Activated naive CD4-positive, alpha-beta T cell treated with anti-CD3 and anti-CD28 coated beads for 36 hours (primary cell): ENCODE measurements at regions of chr15 and their contacts with region 1.

Region 1: GRCh38 chr15:41283653-41284426 is 48.6 kb downstream of the OIP5 start:
- DNase-seq: peak; percentile 99
- H3K4me3 Mint-ChIP-seq: peak overlapping the region; percentile 99
- H3K27ac Mint-ChIP-seq: peak overlapping the region; percentile 97
- H3K4me1 Mint-ChIP-seq: peaks cover 45% of the 10 kb centered on the region
- H3K27me3 Mint-ChIP-seq: no peaks in the 10 kb centered on the region

Region 2: GRCh38 chr15:40941528-40942336 is 342.1 kb before region 1 on chr15:
- CTCF ChIA-PET with region 1: interaction called, 3 read pairs
- intact Hi-C with region 1: loop called (anchors 5 kb)
- DNase-seq: peak; percentile 80
- H3K4me3 Mint-ChIP-seq: peak overlapping the region; percentile 82
- H3K27ac Mint-ChIP-seq: peak overlapping the region; percentile 78
- H3K4me1 Mint-ChIP-seq: peaks cover 32% of the 10 kb centered on the region
- H3K27me3 Mint-ChIP-seq: no peaks in the 10 kb centered on the region

Region 3: DNA sequence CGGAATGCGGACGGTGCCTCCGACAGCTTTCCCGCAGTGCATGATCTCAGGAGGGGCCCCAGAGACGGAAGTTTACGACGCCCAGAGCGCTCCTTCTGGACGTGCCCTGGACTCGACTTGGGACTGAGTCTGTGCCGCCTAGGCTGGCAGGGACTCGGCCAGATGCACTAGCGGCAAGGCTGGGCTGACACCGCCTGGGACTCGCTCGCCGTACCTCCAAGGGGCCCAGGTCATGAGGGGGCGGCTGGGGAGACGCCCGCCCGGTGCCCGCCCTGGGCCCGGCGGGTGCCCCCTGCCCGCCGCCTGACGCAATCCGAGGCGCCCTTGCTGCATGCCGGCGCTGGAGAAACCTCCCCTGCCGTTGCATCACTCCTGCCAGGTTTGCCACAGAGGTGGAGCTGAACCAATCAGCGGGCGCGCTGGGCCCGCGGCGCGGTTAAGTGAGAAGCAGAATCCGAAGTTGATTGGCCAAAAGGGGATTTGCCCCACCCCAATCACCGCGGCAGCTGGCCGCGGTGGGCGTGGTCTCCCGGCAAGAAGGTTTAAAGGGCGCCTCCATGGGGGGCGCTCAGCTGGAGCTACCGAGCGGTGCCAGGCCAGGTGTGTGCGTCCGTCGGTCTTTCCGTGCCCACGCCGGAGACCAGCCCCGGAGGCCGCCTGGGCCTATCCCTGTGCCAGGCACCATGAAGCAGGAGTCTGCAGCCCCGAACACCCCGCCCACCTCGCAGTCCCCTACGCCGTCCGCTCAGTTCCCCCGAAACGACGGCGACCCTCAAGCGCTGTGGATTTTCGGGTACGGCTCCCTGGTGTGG is 330.7 kb before region 1 on chr15 and contains the start of gene CHAC1:
- CTCF ChIA-PET with region 1: no interaction called
- intact Hi-C with region 1: loop called (anchors 1 kb)
- DNase-seq: peak; percentile 99
- H3K4me3 Mint-ChIP-seq: peak within 1 kb of the TSS; percentile 94
- H3K27ac Mint-ChIP-seq: peak within 1 kb of the TSS; percentile 93
- H3K4me1 Mint-ChIP-seq: peaks cover 35% of the 10 kb centered on the region
- H3K27me3 Mint-ChIP-seq: no peaks in the 10 kb centered on the region
- total RNA-seq, gene CHAC1: 19.8 to 20.2 TPM

Region 4: GRCh38 chr15:41116116-41116871 is 167.5 kb before region 1 on chr15 and contains the start of gene INO80:
- CTCF ChIA-PET with region 1: no interaction called
- intact Hi-C with region 1: loop called (anchors 1 kb)
- DNase-seq: peak; percentile 99
- H3K4me3 Mint-ChIP-seq: peak within 1 kb of the TSS; percentile 88
- H3K27ac Mint-ChIP-seq: peak within 1 kb of the TSS; percentile 96
- H3K4me1 Mint-ChIP-seq: peaks cover 21% of the 10 kb centered on the region
- H3K27me3 Mint-ChIP-seq: no peaks in the 10 kb centered on the region
- total RNA-seq, gene INO80: 14.0 to 16.8 TPM

Region 5: DNA sequence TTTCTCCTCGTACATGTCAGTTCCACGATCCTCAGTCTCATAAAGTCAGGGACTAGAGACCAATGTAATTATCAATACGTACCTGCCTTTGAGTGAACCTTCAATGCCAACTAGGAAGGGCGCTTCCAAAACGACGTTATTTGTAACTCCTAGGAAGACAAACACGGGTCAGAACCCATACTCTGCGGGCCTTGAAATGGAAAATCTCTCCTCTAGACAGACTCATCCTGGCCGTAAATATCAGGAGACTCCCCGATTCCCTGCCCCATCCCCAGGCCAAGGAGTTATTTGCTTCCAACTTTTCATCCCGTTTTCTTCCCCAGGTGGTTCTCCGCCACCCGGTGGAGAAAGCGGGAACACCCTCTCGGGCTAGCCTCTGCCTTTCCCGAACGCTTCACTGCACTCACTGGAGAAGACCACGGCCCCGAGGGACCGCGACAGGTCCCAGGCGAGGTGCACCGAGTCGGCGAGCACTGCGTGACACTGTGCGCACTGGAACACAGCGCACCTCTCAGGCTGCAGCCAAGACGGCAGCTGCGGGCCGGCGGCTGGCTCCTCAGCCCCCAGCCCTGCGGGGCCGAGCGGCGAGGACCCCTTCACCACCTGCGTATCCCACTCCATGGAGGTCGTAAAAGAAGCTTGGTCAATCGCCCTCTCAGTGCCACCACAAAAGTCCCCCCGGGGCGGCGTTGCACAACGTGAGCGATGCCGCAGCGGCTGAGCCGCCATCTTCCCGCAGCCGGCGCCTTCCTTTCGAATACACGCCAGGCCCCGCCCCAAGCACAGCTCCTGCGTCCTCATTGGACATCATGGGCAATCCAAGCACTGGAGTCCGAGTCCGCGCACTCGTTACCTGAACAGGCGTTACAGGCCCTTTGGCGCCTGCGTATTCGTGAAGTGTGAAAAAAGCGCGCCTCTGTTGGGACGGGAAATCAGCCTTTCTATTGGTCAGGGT is 48.3 kb after region 1 on chr15 and contains the start of gene OIP5:
- CTCF ChIA-PET with region 1: interaction called, 3 read pairs
- intact Hi-C with region 1: loop called (anchors 1 kb)
- DNase-seq: peak; percentile 100
- H3K4me3 Mint-ChIP-seq: peak within 1 kb of the TSS; percentile 100
- H3K27ac Mint-ChIP-seq: peak within 1 kb of the TSS; percentile 98
- H3K4me1 Mint-ChIP-seq: peaks cover 26% of the 10 kb centered on the region
- H3K27me3 Mint-ChIP-seq: no peaks in the 10 kb centered on the region
- total RNA-seq, gene OIP5: 9.5 to 10.7 TPM

Region 6: DNA sequence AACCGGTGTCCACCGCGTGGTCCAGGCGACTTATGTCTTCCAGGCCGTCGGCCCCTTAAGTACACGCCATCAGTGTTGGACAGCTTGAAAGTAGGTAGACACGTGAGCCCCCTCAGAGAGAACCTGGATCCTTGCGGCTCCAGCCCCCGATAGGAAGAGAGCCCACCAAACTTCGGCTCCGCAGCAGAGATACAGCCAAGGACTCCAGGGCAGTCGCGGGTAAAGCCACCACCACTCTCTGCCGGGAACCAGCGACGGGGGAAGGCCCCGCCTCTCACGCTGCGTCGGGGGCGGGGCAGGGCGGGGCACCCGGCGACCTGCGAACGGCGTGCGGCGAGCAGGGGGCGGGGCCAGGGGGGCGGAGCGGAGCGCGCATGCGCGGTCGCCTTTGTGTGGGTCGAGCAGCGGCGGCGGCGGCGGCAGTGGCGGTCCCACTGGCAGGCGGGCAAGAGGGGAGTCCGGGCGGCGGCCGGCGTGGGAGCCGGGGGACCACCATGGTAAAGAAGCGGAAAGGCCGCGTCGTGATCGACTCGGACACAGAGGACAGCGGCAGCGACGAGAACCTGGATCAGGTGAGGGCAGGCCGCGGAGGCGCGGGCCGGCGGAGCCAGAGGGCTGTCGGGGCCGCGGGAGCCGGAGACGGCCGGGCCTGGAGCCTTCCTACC is 133.0 kb after region 1 on chr15 and contains the start of gene RTF1:
- CTCF ChIA-PET with region 1: no interaction called
- intact Hi-C with region 1: loop called (anchors 5 kb)
- DNase-seq: peak; percentile 95
- H3K4me3 Mint-ChIP-seq: peak within 1 kb of the TSS; percentile 87
- H3K27ac Mint-ChIP-seq: peak within 1 kb of the TSS; percentile 89
- H3K4me1 Mint-ChIP-seq: peaks cover 43% of the 10 kb centered on the region
- H3K27me3 Mint-ChIP-seq: no peaks in the 10 kb centered on the region
- total RNA-seq, gene RTF1: 18.7 to 19.5 TPM